Thyroid gland (tissue), 4 donors: ENCODE measurements at regions of chr19 and their contacts with region 1.

Region 1: GRCh38 chr19:2648528-2648937 is 54.0 kb downstream of the GNG7 start:
- DNase-seq: peak; percentile 81 to 86
- H3K4me3 ChIP-seq: no peak overlapping the region
- H3K27ac ChIP-seq: no peak overlapping the region
- H3K4me1 ChIP-seq: no peaks in the 10 kb centered on the region
- H3K27me3 ChIP-seq: no peaks in the 10 kb centered on the region
- CTCF ChIP-seq: peak in 5 of 6 experiments; percentile 77 to 96 (median 91)
- POLR2A ChIP-seq: no peak

Region 2: DNA sequence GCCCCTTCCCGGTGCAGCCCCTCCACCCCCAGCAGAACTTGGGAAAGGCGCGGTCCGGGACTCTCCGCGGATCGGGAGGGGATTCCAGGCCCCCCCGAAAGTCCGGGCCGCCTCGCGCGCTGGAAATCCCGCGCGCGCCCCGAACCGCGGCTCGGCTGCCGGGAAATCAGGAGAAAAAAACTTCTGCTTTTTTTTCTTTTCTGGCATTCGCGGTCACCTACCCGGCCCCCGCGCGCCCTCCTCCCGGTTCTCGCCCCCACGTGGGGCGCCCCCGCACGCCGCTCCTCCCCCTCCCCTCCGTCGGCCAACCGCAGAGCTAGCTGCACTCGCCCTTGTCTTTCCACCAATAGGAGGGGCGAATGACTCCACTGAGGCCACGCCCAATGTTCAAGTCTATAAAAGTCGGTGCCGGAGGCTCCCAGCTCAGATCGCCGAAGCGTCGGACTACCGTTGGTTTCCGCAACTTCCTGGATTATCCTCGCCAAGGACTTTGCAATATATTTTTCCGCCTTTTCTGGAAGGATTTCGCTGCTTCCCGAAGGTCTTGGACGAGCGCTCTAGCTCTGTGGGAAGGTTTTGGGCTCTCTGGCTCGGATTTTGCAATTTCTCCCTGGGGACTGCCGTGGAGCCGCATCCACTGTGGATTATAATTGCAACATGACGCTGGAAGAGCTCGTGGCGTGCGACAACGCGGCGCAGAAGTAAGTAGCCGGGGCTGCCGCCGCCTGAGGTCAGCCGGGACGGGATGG is 172.7 kb before region 1 on chr19 and contains the start of gene GADD45B:
- intact Hi-C with region 1: no loop called
- DNase-seq: peak; percentile 98
- H3K4me3 ChIP-seq: peak within 1 kb of the TSS; percentile 93 to 100 (median 99)
- H3K27ac ChIP-seq: peak within 1 kb of the TSS; percentile 96 to 99 (median 98)
- H3K4me1 ChIP-seq: peaks cover 16 to 31% of the 10 kb centered on the region in 2 donors
- H3K27me3 ChIP-seq: no peaks in the 10 kb centered on the region
- CTCF ChIP-seq: no peak
- POLR2A ChIP-seq: peak; percentile 100
- total RNA-seq, gene GADD45B: 148 to 250 (median 195) TPM

Region 3: DNA sequence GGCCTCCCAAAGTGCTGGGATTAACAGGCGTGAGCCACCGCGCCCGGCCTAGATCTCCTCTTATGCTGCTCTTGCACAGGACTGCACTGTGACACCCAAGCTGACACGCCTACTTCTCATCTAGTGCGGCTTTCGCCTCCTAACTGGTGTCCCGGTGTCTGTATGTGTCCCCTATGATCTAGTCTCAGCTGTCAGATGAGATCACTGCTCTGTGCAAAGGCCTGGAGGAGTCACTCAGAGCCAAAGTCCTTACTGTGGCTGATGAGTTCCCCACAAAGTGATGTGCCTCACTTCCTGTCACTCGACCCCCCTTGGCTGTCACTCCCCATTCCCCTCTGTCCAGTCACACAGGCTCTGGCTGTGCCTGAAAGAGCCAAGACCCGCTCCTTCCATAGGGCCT is 221.1 kb after region 1 on chr19:
- intact Hi-C with region 1: loop called (anchors 5 kb)
- DNase-seq: no peak
- H3K4me3 ChIP-seq: no peak overlapping the region
- H3K27ac ChIP-seq: no peak overlapping the region
- H3K4me1 ChIP-seq: no peaks in the 10 kb centered on the region
- H3K27me3 ChIP-seq: no peaks in the 10 kb centered on the region
- CTCF ChIP-seq: no peak
- POLR2A ChIP-seq: no peak